Activated naive CD4-positive, alpha-beta T cell treated with anti-CD3 and anti-CD28 coated beads, Interleukin-2, amount 10 ng/mL, durations not matched to agents 7 days and 5 days (primary cell): ENCODE measurements at regions of chr12 and their contacts with region 1.

Region 1: GRCh38 chr12:49331380-49332222 is 5.4 kb downstream of the C1QL4 start:
- DNase-seq: no peak
- H3K4me3 Mint-ChIP-seq: no peak overlapping the region
- H3K27ac Mint-ChIP-seq: no peak overlapping the region
- H3K4me1 Mint-ChIP-seq: peaks cover 12% of the 10 kb centered on the region
- H3K27me3 Mint-ChIP-seq: peaks cover 51% of the 10 kb centered on the region

Region 2: DNA sequence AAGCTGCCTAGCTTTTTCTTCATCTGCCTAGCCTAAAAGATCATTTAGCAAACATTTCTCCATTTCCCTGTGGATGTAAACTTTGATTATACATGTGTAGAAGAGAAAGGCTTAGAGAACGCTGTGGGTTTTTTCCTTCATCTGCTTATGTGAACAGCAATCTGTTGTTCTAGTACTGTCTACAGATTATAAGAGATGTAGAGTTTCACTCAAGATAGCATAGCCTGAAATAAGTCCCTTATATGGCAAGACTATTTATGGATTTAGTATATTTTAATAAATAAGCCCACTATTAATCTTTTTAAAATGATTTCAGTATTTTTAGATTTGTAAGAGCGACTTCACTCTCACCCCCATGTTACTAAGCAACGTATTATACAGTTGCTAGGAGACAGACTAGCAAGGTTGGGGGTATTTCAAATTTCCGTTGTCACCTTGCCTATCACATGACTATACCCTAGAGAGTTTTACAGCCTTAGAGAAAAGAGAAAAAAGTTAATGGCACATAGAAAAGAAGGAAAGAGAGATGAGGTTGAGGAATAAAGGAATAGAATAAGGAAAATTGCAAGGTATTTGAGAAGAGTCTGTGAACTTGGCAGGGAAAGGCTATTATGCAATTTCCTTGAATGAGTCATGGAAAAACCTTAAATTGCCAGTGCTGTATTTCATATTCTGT is 130.5 kb before region 1 on chr12:
- CTCF ChIA-PET with region 1: no interaction called
- DNase-seq: no peak
- H3K4me3 Mint-ChIP-seq: no peak overlapping the region
- H3K27ac Mint-ChIP-seq: no peak overlapping the region
- H3K4me1 Mint-ChIP-seq: peaks cover 10% of the 10 kb centered on the region
- H3K27me3 Mint-ChIP-seq: peaks cover 10% of the 10 kb centered on the region

Region 3: DNA sequence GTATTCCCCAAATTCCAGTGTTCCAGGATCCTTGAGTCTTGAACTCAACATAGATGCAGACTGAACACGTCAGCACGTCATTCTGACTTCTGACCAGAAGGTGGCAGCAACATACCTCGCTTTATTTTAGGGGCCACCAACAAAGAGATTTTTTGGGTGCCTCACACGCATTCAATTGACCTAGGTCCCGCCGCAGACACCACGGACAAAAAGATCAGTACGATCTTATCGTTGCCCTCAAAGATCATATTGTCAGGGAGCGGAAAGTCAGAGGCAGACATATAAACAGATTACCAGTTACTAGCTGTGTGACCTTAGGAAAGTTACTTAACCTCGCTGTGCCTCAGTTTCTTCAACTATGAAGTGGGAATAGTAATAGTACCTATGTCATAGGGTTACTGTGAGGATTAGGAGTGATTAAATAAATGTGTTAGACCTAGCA is 43.2 kb before region 1 on chr12:
- CTCF ChIA-PET with region 1: interaction called, 20 read pairs
- DNase-seq: peak; percentile 84
- H3K4me3 Mint-ChIP-seq: no peak overlapping the region
- H3K27ac Mint-ChIP-seq: no peak overlapping the region
- H3K4me1 Mint-ChIP-seq: peaks cover 2% of the 10 kb centered on the region
- H3K27me3 Mint-ChIP-seq: peaks cover 81% of the 10 kb centered on the region

Region 4: DNA sequence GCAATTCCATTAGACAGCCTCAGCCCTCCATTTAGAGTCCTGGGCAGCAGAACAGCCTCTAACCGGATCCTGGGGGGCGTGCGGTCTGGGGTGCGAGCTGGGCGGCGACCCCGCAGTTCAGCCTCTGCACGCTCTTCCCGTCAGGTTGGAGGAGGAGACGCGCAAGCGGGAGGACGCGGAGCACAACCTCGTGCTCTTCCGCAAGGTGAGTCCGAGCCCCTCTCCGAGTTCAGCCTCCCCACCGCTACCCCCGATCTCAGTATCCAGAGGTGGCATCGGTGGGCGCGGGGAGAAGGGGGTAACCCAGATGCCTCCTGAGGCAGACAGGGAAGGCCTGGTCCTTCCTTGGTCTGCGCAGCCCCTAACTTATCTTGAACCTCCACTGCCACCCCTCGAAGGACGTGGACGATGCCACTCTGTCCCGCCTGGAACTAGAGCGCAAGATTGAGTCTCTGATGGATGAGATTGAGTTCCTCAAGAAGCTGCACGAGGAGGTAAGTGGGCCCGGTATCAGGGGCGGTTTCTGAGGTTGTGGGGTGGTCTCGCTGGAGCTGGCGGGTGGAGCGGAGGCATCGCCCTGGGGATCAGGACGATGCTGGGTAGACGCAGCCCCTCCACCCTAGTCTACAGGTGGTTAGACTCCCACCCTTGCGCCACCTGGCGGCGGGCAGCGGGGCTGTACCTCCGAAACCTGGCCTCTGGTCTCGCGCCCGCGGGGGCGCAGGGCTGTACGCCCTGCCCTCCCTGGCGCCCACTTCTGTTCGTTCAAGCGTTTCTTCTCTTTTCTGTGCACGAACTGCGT is 35.4 kb before region 1 on chr12:
- CTCF ChIA-PET with region 1: interaction called, 20 read pairs
- DNase-seq: peak; percentile 76
- H3K4me3 Mint-ChIP-seq: peak overlapping the region; percentile 37
- H3K27ac Mint-ChIP-seq: no peak overlapping the region
- H3K4me1 Mint-ChIP-seq: peaks cover 25% of the 10 kb centered on the region
- H3K27me3 Mint-ChIP-seq: peaks cover 96% of the 10 kb centered on the region

Region 5: GRCh38 chr12:49342066-49342913 is 10.7 kb after region 1 on chr12:
- CTCF ChIA-PET with region 1: interaction called, 30 read pairs
- DNase-seq: peak; percentile 86
- H3K4me3 Mint-ChIP-seq: peak overlapping the region; percentile 31
- H3K27ac Mint-ChIP-seq: no peak overlapping the region
- H3K4me1 Mint-ChIP-seq: peaks cover 45% of the 10 kb centered on the region
- H3K27me3 Mint-ChIP-seq: peaks cover 100% of the 10 kb centered on the region

Region 6: GRCh38 chr12:49347384-49348237 is 16.0 kb after region 1 on chr12:
- CTCF ChIA-PET with region 1: interaction called, 30 read pairs
- DNase-seq: peak; percentile 83
- H3K4me3 Mint-ChIP-seq: peak overlapping the region; percentile 38
- H3K27ac Mint-ChIP-seq: no peak overlapping the region
- H3K4me1 Mint-ChIP-seq: peaks cover 41% of the 10 kb centered on the region
- H3K27me3 Mint-ChIP-seq: peaks cover 93% of the 10 kb centered on the region

Region 7: DNA sequence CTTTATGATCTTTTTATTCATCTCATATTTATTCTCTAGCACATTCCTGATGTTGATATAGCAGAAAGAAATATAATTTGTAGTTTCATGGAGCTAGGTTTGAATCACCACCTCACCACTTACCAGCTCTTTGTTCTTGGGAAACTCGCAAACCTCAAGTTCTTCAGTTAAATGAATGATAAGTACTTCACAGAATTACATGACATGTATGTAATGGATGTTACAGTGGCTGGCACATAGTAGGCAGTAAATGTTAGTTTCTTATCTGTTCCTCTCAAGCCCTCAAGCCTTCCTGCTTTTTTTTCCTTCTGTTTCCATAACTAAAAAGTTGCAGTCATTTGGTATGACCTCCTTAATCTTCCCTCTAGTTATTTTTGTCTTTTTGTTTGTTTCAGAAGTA is 90.5 kb after region 1 on chr12:
- CTCF ChIA-PET with region 1: no interaction called
- DNase-seq: no peak
- H3K4me3 Mint-ChIP-seq: no peak overlapping the region
- H3K27ac Mint-ChIP-seq: peak overlapping the region; percentile 25
- H3K4me1 Mint-ChIP-seq: no peaks in the 10 kb centered on the region
- H3K27me3 Mint-ChIP-seq: no peaks in the 10 kb centered on the region